OCI-LY7 (cell line): ENCODE measurements at regions of chr17 and their contacts with region 1.

Region 1: DNA sequence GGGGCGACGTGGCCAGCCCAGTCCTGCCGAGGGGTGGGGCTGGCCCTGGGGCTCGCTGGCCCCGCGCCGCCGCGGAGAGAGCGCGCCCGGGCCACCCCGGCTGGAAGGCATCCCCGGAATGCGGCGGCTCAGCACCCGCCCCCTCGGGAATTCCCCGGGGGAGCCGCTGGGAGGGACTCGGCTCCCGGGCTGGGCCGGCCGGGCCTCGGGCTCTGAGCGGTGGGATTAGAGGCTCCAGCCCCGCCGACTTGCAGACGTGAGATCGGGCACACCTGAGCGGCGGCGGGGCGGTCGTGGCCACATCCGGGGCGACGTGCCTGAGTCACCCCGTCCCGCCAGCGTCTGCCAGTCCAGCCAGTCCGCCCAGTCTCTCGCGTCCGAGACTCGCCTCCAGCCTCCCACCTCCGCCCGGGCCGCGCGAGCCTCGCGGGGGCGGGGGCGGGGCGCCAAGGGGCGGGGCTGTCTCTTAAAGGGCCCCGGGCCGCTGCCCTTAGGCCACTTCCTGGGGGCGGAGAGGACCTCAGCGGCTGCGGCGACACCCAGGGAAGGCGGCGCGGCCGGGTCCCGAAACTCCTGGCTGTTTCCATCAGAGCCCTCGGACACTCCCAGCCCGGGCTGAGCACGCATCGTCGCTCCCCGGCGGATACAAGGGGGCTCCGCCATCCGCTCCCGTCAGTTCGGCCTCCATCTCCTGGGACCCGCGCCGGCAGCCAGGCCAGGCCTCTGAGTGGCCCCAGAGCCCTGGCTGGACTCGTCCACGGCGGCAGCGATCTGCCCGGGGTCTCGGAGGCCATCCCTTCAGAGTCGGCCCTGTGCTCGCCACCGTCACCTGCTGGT is at the start of gene KCTD11:
- DNase-seq: peak; percentile 80
- H3K4me3 ChIP-seq: peak within 1 kb of the TSS; percentile 75
- H3K27ac ChIP-seq: peak within 1 kb of the TSS; percentile 55
- H3K4me1 ChIP-seq: peaks cover 36% of the 10 kb centered on the region
- CTCF ChIP-seq: no peak
- total RNA-seq, gene KCTD11: 4.1 and 6.0 TPM in 2 replicates

Region 2: GRCh38 chr17:7280519-7281429 is 71.1 kb before region 1 on chr17:
- CTCF ChIA-PET with region 1: no interaction called
- POLR2A ChIA-PET with region 1: no interaction called
- intact Hi-C with region 1: loop called (anchors 2 kb)
- DNase-seq: peak; percentile 92
- H3K4me3 ChIP-seq: peak overlapping the region; percentile 59
- H3K27ac ChIP-seq: peak overlapping the region; percentile 57
- H3K4me1 ChIP-seq: peaks cover 32% of the 10 kb centered on the region
- CTCF ChIP-seq: peak; percentile 96

Region 3: DNA sequence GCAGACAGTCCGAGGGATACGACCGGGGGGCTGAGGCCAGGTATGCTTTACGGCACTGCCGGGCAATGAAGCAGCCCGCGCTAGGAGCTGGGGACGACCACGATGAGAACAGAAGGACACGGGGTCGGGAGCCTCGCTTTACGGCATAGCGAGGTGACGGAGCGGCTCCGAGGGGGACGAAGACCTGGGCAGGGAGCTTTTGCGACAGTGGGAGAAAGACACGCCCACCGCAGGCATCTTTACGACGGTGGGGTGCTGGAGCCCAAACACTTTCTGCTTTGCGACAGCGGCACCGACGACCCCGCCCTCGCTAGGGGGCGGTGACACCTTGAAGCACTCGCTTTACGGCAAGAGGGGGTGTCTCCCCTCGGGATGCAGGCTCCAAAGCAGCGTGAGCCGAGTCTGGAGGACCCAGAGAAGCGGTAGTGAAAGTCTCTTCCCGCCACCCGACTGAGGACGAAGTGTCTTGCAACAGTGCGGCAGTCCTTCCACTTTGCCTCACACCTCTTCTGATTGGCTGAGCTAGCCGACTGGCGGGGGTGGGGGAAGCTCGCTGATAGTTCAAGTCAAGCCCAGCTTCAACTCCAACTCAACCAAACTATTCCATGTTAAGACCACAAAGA is 22.4 kb before region 1 on chr17:
- CTCF ChIA-PET with region 1: interaction called, 4 read pairs
- POLR2A ChIA-PET with region 1: interaction called, 4 read pairs
- intact Hi-C with region 1: loop called (anchors 1 kb)
- DNase-seq: peak; percentile 100
- H3K4me3 ChIP-seq: peak overlapping the region; percentile 82
- H3K27ac ChIP-seq: peak overlapping the region; percentile 96
- H3K4me1 ChIP-seq: peaks cover 42% of the 10 kb centered on the region
- CTCF ChIP-seq: no peak

Region 4: GRCh38 chr17:7435221-7435675 is 83.4 kb after region 1 on chr17 and contains the start of gene TMEM102:
- CTCF ChIA-PET with region 1: interaction called, 13 read pairs
- POLR2A ChIA-PET with region 1: interaction called, 5 read pairs
- intact Hi-C with region 1: loop called (anchors 1 kb)
- DNase-seq: peak; percentile 99
- H3K4me3 ChIP-seq: peak within 1 kb of the TSS; percentile 76
- H3K27ac ChIP-seq: peak within 1 kb of the TSS; percentile 77
- H3K4me1 ChIP-seq: peaks cover 32% of the 10 kb centered on the region
- CTCF ChIP-seq: no peak
- total RNA-seq, gene TMEM102: 13.4 and 15.6 TPM in 2 replicates

Region 5: DNA sequence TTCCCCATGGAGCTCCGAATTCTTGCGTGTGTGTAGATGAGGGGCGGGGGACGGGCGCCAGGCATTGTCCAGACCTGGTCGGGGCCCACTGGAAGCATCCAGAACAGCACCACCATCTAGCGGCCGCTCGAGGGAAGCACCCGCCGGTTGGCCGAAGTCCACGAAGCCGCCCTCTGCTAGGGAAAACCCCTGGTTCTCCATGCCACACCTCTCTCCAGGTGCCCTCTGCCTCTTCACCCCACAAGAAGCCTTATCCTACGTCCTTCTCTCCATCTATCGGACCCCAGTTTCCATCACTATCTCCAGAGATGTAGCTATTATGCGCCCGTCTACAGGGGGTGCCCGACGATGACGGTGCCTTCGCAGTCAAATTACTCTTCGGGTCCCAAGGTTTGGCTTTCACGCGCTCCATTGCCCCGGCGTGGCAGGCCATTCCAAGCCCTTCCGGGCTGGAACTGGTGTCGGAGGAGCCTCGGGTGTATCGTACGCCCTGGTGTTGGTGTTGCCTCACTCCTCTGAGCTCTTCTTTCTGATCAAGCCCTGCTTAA is 209.2 kb after region 1 on chr17:
- CTCF ChIA-PET with region 1: interaction called, 4 read pairs
- POLR2A ChIA-PET with region 1: no interaction called
- intact Hi-C with region 1: loop called (anchors 1 kb)
- DNase-seq: peak; percentile 88
- H3K4me3 ChIP-seq: peak overlapping the region; percentile 94
- H3K27ac ChIP-seq: peak overlapping the region; percentile 80
- H3K4me1 ChIP-seq: peaks cover 47% of the 10 kb centered on the region
- CTCF ChIP-seq: peak; percentile 74